Naive thymus-derived CD4-positive, alpha-beta T cell (primary cell): ENCODE measurements at regions of chr6 and their contacts with region 1.

Region 1: GRCh38 chr6:3281631-3282475 is 23.1 kb downstream of the PSMG4 start:
- DNase-seq: no peak
- ATAC-seq: no peak
- H3K4me3 ChIP-seq: no peak overlapping the region
- H3K4me3 Mint-ChIP-seq: no peak overlapping the region
- H3K27ac ChIP-seq: no peak overlapping the region
- H3K27ac Mint-ChIP-seq: no peak overlapping the region
- H3K4me1 ChIP-seq: peaks cover 0 to 5% of the 10 kb centered on the region in 2 donors
- H3K4me1 Mint-ChIP-seq: peaks cover 0 to 6% (median 4%) of the 10 kb centered on the region in 7 donors
- H3K27me3 ChIP-seq: no peaks in the 10 kb centered on the region
- H3K27me3 Mint-ChIP-seq: no peaks in the 10 kb centered on the region

Region 2: GRCh38 chr6:1903780-1904465 is 1377.9 kb before region 1 on chr6:
- CTCF ChIA-PET with region 1: no interaction called
- POLR2A ChIA-PET with region 1: no interaction called
- intact Hi-C with region 1: no loop called
- DNase-seq: no peak
- ATAC-seq: no peak
- H3K4me3 ChIP-seq: no peak overlapping the region
- H3K4me3 Mint-ChIP-seq: no peak overlapping the region
- H3K27ac ChIP-seq: no peak overlapping the region
- H3K27ac Mint-ChIP-seq: no peak overlapping the region
- H3K4me1 ChIP-seq: no peaks in the 10 kb centered on the region
- H3K4me1 Mint-ChIP-seq: no peaks in the 10 kb centered on the region
- H3K27me3 ChIP-seq: no peaks in the 10 kb centered on the region
- H3K27me3 Mint-ChIP-seq: no peaks in the 10 kb centered on the region

Region 3: DNA sequence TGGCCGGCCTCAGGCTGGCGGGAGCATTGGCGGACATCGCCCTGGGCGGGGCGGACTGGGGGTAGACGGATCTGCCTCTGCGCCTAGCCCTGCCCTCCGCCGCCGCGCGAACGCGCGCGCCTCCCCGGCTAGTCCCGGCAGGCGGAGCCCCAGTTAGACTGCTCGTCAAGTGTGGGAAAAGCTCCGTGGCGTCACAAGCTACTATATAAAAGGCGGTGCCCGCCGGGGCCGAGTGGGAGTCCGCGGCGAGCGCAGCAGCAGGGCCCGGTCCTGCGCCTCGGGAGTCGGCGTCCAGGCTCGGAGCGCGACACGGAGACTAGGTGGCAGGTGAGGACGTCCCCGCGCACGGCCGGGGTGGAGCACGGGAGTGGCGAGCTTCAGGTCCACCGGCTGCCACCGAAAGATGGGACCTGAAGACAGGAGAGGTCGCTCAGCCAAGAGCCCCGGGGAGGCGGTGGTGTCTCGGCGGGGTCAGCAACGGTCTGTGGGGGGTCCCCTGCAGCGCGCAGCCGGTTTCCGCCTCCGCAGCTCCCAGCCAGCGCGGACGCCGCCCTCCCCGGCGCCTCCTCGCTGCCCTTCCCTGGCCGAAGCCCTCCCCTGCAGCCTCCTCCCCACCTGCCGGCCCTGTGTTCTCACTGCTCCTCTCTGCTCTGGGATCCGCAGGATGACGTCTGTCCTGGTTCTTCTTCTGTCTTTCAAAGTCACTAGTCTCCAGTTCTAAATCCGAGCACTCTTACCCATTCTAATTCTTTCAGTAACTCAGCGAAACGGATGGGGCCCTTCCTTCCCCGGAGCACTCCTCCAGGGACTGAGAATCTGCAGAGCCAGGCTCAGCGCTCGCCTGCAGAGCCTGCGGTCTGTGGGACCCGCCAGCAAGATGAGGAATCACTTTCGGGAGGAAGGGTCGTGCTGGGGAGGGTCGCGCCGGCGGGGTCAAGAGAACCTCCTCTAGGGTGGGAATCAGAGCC is 217.8 kb before region 1 on chr6:
- CTCF ChIA-PET with region 1: no interaction called
- POLR2A ChIA-PET with region 1: no interaction called
- intact Hi-C with region 1: no loop called
- DNase-seq: peak; percentile 77 to 94 (median 85)
- ATAC-seq: peak; percentile 87
- H3K4me3 ChIP-seq: peak overlapping the region; percentile 79
- H3K4me3 Mint-ChIP-seq: peak overlapping the region; percentile 86 to 98 (median 94)
- H3K27ac ChIP-seq: peak overlapping the region; percentile 84
- H3K27ac Mint-ChIP-seq: peak overlapping the region; percentile 81 to 96 (median 91)
- H3K4me1 ChIP-seq: peaks cover 3 to 6% of the 10 kb centered on the region in 2 donors
- H3K4me1 Mint-ChIP-seq: peaks cover 25 to 52% (median 42%) of the 10 kb centered on the region in 7 donors
- H3K27me3 ChIP-seq: no peaks in the 10 kb centered on the region
- H3K27me3 Mint-ChIP-seq: no peaks in the 10 kb centered on the region

Region 4: DNA sequence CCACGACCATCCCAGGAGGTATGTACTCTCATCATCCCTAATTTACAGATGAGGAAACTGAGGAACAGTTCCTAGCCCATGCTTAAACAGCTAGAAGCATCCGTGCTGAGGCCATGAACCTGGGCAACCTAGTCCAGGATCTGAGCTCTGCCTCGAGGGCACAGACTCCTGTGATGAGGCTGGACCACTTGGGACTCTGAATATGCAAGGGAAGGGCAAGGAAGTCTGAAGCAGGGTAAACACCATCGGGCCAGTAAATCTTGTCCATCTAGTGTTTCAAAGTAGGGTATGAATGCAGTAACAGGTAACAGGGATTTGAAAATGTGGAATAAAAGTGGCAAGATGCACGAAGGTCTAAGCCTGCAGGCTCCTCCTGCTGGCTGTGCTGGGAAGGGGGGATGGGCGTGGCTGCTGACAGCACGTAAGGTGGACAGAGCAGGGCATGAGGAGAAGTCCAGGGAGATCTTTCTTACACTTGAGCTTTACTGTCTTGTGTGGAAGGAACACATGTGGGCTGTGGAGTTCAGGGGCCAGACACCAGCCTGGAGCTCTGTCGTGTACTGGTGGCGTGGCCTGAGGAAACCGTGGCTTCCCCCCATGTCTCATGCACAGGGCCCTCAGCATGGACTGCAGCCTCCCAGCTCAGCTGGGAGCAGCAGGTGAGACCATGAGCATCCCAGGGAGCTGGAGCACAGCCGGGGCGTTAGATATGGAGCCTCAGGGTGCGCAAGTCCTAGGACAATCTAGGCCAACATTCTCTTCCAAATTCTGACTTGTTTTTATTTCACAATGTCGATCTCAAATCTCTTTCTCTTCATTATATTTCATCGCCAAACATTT is 90.4 kb after region 1 on chr6:
- CTCF ChIA-PET with region 1: no interaction called
- POLR2A ChIA-PET with region 1: no interaction called
- intact Hi-C with region 1: loop called in 1 of 2 experiments (anchors 2 kb)
- DNase-seq: no peak
- ATAC-seq: no peak
- H3K4me3 ChIP-seq: no peak overlapping the region
- H3K4me3 Mint-ChIP-seq: peak overlapping the region in 1 of 10 donors; percentile 24
- H3K27ac ChIP-seq: no peak overlapping the region
- H3K27ac Mint-ChIP-seq: peak overlapping the region in 7 of 9 donors; percentile 48 to 98 (median 89)
- H3K4me1 ChIP-seq: peaks cover 6 to 22% of the 10 kb centered on the region in 2 donors
- H3K4me1 Mint-ChIP-seq: peaks cover 5 to 66% (median 52%) of the 10 kb centered on the region in 7 donors
- H3K27me3 ChIP-seq: no peaks in the 10 kb centered on the region
- H3K27me3 Mint-ChIP-seq: peaks cover 0 to 2% (median 0%) of the 10 kb centered on the region in 5 donors

Region 5: DNA sequence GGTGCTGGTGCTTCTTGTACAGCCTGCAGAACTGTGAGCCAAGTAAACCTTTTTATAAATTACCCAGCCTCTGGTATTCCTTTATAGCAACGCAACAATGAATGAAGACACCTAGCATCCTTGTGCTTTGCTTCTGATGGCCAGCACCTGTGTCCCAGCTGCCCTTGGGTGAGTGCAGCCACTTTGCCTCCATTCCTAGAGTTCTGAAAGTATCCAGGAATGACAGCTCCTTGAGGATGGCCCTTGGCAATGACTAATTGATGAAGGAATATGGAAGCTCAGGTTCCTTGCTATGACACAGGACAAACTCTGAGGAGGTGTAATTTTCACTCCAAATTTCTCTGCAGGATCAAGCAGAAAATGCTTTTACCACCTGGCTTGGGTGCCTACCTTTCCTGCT is 230.1 kb after region 1 on chr6:
- CTCF ChIA-PET with region 1: interaction called, 4 read pairs
- POLR2A ChIA-PET with region 1: no interaction called
- intact Hi-C with region 1: loop called in 1 of 2 experiments (anchors 1 kb)
- DNase-seq: no peak
- ATAC-seq: no peak
- H3K4me3 ChIP-seq: no peak overlapping the region
- H3K4me3 Mint-ChIP-seq: no peak overlapping the region
- H3K27ac ChIP-seq: no peak overlapping the region
- H3K27ac Mint-ChIP-seq: no peak overlapping the region
- H3K4me1 ChIP-seq: no peaks in the 10 kb centered on the region
- H3K4me1 Mint-ChIP-seq: peaks cover 0 to 5% (median 0%) of the 10 kb centered on the region in 7 donors
- H3K27me3 ChIP-seq: no peaks in the 10 kb centered on the region
- H3K27me3 Mint-ChIP-seq: peaks cover 0 to 34% (median 29%) of the 10 kb centered on the region in 5 donors

Region 6: DNA sequence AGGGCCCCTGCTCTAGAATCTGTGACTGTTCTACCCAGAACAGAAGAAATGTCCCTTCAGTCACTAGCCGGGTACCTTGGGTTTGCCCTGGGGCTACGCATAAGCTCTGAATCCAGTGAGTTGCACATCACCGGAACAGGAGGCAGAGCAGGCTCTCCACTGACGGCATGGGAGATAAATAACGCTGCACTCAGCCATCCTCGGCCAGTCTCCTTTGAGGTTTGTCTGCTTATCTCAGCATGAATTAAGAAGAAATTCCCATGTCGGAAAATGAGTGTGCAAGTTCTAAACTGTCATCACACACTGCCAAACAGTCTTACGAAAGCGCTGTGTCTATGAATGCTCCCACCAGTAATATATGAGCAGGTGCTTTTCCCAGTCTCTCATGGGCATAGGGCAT is 658.1 kb after region 1 on chr6:
- CTCF ChIA-PET with region 1: no interaction called
- POLR2A ChIA-PET with region 1: no interaction called
- intact Hi-C with region 1: loop called in 1 of 2 experiments (anchors 10 kb)
- DNase-seq: no peak
- ATAC-seq: no peak
- H3K4me3 ChIP-seq: no peak overlapping the region
- H3K4me3 Mint-ChIP-seq: no peak overlapping the region
- H3K27ac ChIP-seq: no peak overlapping the region
- H3K27ac Mint-ChIP-seq: no peak overlapping the region
- H3K4me1 ChIP-seq: no peaks in the 10 kb centered on the region
- H3K4me1 Mint-ChIP-seq: peaks cover 0 to 5% (median 0%) of the 10 kb centered on the region in 7 donors
- H3K27me3 ChIP-seq: peaks cover 0 to 6% of the 10 kb centered on the region in 2 donors
- H3K27me3 Mint-ChIP-seq: peaks cover 24 to 60% (median 38%) of the 10 kb centered on the region in 5 donors

Region 7: DNA sequence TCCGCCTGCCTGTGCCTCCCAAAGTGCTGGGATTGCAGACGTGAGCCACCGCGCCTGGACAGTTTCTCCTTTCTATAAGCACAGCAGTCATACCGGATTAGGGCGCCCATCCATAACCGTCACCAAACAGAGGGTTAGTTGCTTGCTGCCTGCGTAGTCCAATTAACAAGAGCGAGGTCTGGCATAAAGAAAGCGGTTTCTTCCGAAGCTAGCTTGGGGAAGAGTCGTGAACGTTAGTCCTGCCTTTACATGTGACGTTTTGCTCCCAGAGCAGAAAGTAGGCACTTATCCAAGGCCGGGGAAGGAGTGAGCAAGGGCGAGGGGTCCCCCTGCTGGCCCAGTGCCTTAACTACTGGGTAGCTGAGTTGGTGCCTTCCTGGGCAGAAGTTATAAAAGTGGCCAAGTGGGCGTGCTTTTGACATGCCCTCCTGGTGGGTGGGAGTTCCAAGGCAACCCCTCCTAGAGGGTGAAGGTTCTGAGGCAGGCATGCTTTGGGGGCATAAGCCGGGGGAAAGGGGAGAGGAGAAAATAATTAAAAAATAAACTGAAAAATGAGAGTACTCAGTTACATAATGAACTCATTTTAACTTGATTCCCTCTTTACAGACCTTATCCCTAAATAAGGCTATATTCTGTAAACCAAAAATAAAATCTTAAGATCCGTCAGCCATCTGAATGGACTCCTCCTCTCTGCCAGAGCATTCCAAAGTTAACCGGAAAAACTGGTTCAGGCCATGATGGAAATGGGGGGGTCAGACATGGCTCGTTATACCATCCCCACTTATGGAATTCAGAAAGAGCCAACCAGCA is 709.0 kb after region 1 on chr6:
- CTCF ChIA-PET with region 1: no interaction called
- POLR2A ChIA-PET with region 1: no interaction called
- intact Hi-C with region 1: loop called in 1 of 2 experiments (anchors 5 kb)
- DNase-seq: peak; percentile 45 to 72 (median 58)
- ATAC-seq: peak; percentile 96
- H3K4me3 ChIP-seq: no peak overlapping the region
- H3K4me3 Mint-ChIP-seq: peak overlapping the region in 2 of 10 donors; percentile 19 to 29
- H3K27ac ChIP-seq: no peak overlapping the region
- H3K27ac Mint-ChIP-seq: peak overlapping the region in 3 of 9 donors; percentile 3 to 43 (median 19)
- H3K4me1 ChIP-seq: peaks cover 0 to 7% of the 10 kb centered on the region in 2 donors
- H3K4me1 Mint-ChIP-seq: peaks cover 13 to 37% (median 25%) of the 10 kb centered on the region in 7 donors
- H3K27me3 ChIP-seq: no peaks in the 10 kb centered on the region
- H3K27me3 Mint-ChIP-seq: no peaks in the 10 kb centered on the region